Colonic mucosa (tissue), 4 donors: ENCODE measurements at regions of chr2 and their contacts with region 1.

Region 1: GRCh38 chr2:216698895-216699294 is 3.5 kb upstream of the IGFBP5 start:
- DNase-seq: no peak
- H3K4me3 ChIP-seq: no peak overlapping the region
- H3K27ac ChIP-seq: no peak overlapping the region
- H3K4me1 ChIP-seq: no peaks in the 10 kb centered on the region
- H3K27me3 ChIP-seq: peaks cover 17% of the 10 kb centered on the region
- CTCF ChIP-seq: peak; percentile 23

Region 2: DNA sequence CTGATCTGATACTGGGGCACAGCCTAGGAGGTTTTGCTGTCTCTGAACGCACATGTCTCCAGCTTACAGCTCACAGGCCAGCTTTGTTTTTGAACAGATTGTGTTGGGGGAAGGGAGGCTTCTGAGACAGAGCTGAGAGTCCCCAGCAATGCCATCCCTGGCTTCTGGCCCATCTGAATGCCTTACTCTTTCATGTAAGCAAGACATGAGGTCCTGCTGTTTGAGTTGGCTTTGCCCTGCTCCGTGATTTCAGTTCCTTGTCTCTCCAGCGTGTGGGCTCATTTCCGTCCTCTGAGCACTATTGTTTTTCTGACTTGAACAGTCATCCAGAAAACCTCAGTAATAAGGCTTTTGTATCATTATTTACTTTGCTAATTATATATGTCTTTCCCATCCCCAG is 355.9 kb after region 1 on chr2:
- intact Hi-C with region 1: loop called (anchors 10 kb)
- DNase-seq: no peak
- H3K4me3 ChIP-seq: no peak overlapping the region
- H3K27ac ChIP-seq: no peak overlapping the region
- H3K4me1 ChIP-seq: no peaks in the 10 kb centered on the region
- H3K27me3 ChIP-seq: no peaks in the 10 kb centered on the region
- CTCF ChIP-seq: no peak

Region 3: GRCh38 chr2:217166241-217166850 is 467.5 kb after region 1 on chr2:
- intact Hi-C with region 1: loop called (anchors 10 kb)
- DNase-seq: no peak
- H3K4me3 ChIP-seq: no peak overlapping the region
- H3K27ac ChIP-seq: no peak overlapping the region
- H3K4me1 ChIP-seq: no peaks in the 10 kb centered on the region
- H3K27me3 ChIP-seq: no peaks in the 10 kb centered on the region
- CTCF ChIP-seq: no peak